ENCODE measurements at regions of chr11 and their contacts with region 1.

Region 1: GRCh38 chr11:86483940-86484794 is 109.5 kb downstream of the CCDC81 start:
- DNase-seq: peak; percentile 92
- ATAC-seq: peak; percentile 92
- H3K4me3 ChIP-seq: no peak overlapping the region
- H3K27ac ChIP-seq: peak overlapping the region; percentile 99
- H3K4me1 ChIP-seq: peaks cover 31% of the 10 kb centered on the region
- H3K27me3 ChIP-seq: no peaks in the 10 kb centered on the region
- CTCF ChIP-seq: no peak

Region 2: GRCh38 chr11:86174101-86175046 is 309.8 kb before region 1 on chr11:
- CTCF ChIA-PET with region 1: no interaction called
- POLR2A ChIA-PET with region 1: no interaction called
- intact Hi-C with region 1: no loop called
- DNase-seq: peak; percentile 86
- ATAC-seq: peak; percentile 90
- H3K4me3 ChIP-seq: no peak overlapping the region
- H3K27ac ChIP-seq: peak overlapping the region; percentile 90
- H3K4me1 ChIP-seq: peaks cover 28% of the 10 kb centered on the region
- H3K27me3 ChIP-seq: no peaks in the 10 kb centered on the region
- CTCF ChIP-seq: no peak

Region 3: GRCh38 chr11:86508604-86509587 is 24.7 kb after region 1 on chr11:
- CTCF ChIA-PET with region 1: no interaction called
- POLR2A ChIA-PET with region 1: no interaction called
- intact Hi-C with region 1: loop called (anchors 1 kb)
- DNase-seq: peak; percentile 92
- ATAC-seq: peak; percentile 88
- H3K4me3 ChIP-seq: peak overlapping the region; percentile 32
- H3K27ac ChIP-seq: peak overlapping the region; percentile 99
- H3K4me1 ChIP-seq: peaks cover 43% of the 10 kb centered on the region
- H3K27me3 ChIP-seq: no peaks in the 10 kb centered on the region
- CTCF ChIP-seq: no peak

Region 4: GRCh38 chr11:86551286-86552092 is 67.3 kb after region 1 on chr11:
- CTCF ChIA-PET with region 1: no interaction called
- POLR2A ChIA-PET with region 1: no interaction called
- intact Hi-C with region 1: loop called (anchors 1 kb)
- DNase-seq: peak; percentile 86
- ATAC-seq: peak; percentile 91
- H3K4me3 ChIP-seq: peak overlapping the region; percentile 22; the same call in 1 of the 2 replicates
- H3K27ac ChIP-seq: peak overlapping the region; percentile 65
- H3K4me1 ChIP-seq: peaks cover 20% of the 10 kb centered on the region
- H3K27me3 ChIP-seq: no peaks in the 10 kb centered on the region
- CTCF ChIP-seq: no peak

Region 5: GRCh38 chr11:86565801-86566312 is 81.7 kb after region 1 on chr11:
- CTCF ChIA-PET with region 1: no interaction called
- POLR2A ChIA-PET with region 1: no interaction called
- intact Hi-C with region 1: no loop called
- DNase-seq: no peak
- ATAC-seq: no peak
- H3K4me3 ChIP-seq: no peak overlapping the region
- H3K27ac ChIP-seq: no peak overlapping the region
- H3K4me1 ChIP-seq: 0 out of 2 replicates have a peak, but pooled peaks cover 5% of the 10 kb centered on the region
- H3K27me3 ChIP-seq: no peaks in the 10 kb centered on the region
- CTCF ChIP-seq: no peak